Common myeloid progenitor, CD34-positive (primary cell): ENCODE measurements at regions of chr16 and their contacts with region 1.

Region 1: GRCh38 chr16:391885-392335 is 5.1 kb upstream of the NME4 start:
- DNase-seq: peak; percentile 76 to 91 (median 88)
- H3K4me3 ChIP-seq: no peak overlapping the region
- H3K27ac ChIP-seq: no peak overlapping the region
- H3K4me1 ChIP-seq: peaks cover 5 to 12% (median 12%) of the 10 kb centered on the region in 4 experiments
- H3K27me3 ChIP-seq: no peaks in the 10 kb centered on the region

Region 2: DNA sequence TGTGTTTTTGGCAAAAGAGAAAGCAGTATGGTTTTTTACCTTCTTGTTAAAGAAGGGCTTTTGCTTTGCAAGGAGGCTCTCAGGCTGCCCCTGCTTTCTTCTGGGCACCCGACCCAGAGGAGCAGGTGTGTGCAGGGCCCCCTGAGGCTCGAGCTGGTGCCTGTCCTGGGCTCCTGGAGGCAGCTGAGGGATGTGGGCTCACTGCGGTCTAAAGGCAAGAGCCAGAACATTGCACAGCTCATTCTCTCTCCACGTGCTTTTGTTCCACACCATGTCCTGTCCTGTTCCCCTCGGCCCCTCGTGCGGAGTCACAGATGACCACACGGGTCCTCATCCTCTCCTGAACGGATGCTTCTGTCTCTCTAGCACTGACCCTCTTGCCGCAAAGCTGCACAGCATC is 98.9 kb after region 1 on chr16:
- CTCF ChIA-PET with region 1: interaction called, 11 read pairs
- POLR2A ChIA-PET with region 1: no interaction called
- DNase-seq: no peak
- H3K4me3 ChIP-seq: no peak overlapping the region
- H3K27ac ChIP-seq: no peak overlapping the region
- H3K4me1 ChIP-seq: peaks cover 0 to 13% (median 0%) of the 10 kb centered on the region in 4 experiments
- H3K27me3 ChIP-seq: no peaks in the 10 kb centered on the region